Lower leg skin (tissue), 4 donors: ENCODE measurements at regions of chr3 and their contacts with region 1.

Region 1: GRCh38 chr3:4703054-4703480 is 209.9 kb downstream of the ITPR1 start:
- DNase-seq: no peak
- H3K4me3 ChIP-seq: no peak overlapping the region
- CTCF ChIP-seq: no peak
- POLR2A ChIP-seq: no peak

Region 2: GRCh38 chr3:4656059-4656458 is 47.0 kb before region 1 on chr3:
- intact Hi-C with region 1: loop called (anchors 1 kb)
- DNase-seq: peak in 1 of 2 donors; percentile 23
- H3K4me3 ChIP-seq: no peak overlapping the region
- CTCF ChIP-seq: no peak
- POLR2A ChIP-seq: no peak

Region 3: GRCh38 chr3:4866841-4867240 is 163.8 kb after region 1 on chr3:
- intact Hi-C with region 1: no loop called
- DNase-seq: no peak
- H3K4me3 ChIP-seq: no peak overlapping the region
- CTCF ChIP-seq: no peak
- POLR2A ChIP-seq: no peak

Region 4: GRCh38 chr3:5059782-5060181 is 356.7 kb after region 1 on chr3:
- intact Hi-C with region 1: loop called (anchors 10 kb)
- DNase-seq: peak in 1 of 2 donors; percentile 8
- H3K4me3 ChIP-seq: no peak overlapping the region
- CTCF ChIP-seq: no peak
- POLR2A ChIP-seq: no peak